PC-9 (cell line): ENCODE measurements at regions of chr1 and their contacts with region 1.

Region 1: GRCh38 chr1:75785983-75786853 is at the start of gene RABGGTB:
- DNase-seq: peak; percentile 88 to 95
- H3K4me3 ChIP-seq: peak within 1 kb of the TSS; percentile 88
- H3K27ac ChIP-seq: peak within 1 kb of the TSS; percentile 81
- H3K4me1 ChIP-seq: peaks cover 37% of the 10 kb centered on the region
- H3K27me3 ChIP-seq: no peaks in the 10 kb centered on the region
- CTCF ChIP-seq: no peak
- total RNA-seq, gene RABGGTB: 80.6 and 87.5 TPM in 2 replicates

Region 2: DNA sequence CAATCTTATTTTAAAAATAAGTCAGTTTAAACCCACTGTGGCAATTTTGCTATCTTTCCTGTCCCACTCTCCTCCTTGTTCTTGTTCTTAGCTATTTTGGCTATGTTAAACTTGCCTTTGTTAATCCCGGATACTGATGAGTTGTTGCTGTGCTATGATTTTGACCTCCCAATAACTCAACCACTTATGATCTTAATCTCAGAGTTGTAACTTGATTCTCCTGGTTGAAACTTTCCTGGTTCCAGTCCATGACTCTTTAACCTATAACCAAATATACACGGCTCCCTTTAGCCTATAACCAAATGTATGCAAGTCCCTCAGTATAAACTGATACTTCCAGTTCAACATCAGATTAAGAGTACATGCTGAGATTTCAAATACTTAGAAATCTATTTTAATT is 77.3 kb before region 1 on chr1:
- CTCF ChIA-PET with region 1: interaction called, 3 read pairs
- POLR2A ChIA-PET with region 1: interaction called, 14 read pairs
- intact Hi-C with region 1: no loop called
- DNase-seq: peak in 1 of 2 experiments; percentile 94
- H3K4me3 ChIP-seq: peak overlapping the region; percentile 9; the same call in 1 of the 2 replicates
- H3K27ac ChIP-seq: peak overlapping the region; percentile 64
- H3K4me1 ChIP-seq: peaks cover 43% of the 10 kb centered on the region
- H3K27me3 ChIP-seq: no peaks in the 10 kb centered on the region
- CTCF ChIP-seq: no peak

Region 3: GRCh38 chr1:75724472-75725022 is 61.7 kb before region 1 on chr1 and contains the start of gene ACADM:
- CTCF ChIA-PET with region 1: no interaction called
- POLR2A ChIA-PET with region 1: no interaction called
- intact Hi-C with region 1: loop called (anchors 1 kb)
- DNase-seq: peak; percentile 81 to 86
- H3K4me3 ChIP-seq: peak within 1 kb of the TSS; percentile 90
- H3K27ac ChIP-seq: peak within 1 kb of the TSS; percentile 73
- H3K4me1 ChIP-seq: peaks cover 17% of the 10 kb centered on the region
- H3K27me3 ChIP-seq: no peaks in the 10 kb centered on the region
- CTCF ChIP-seq: no peak
- total RNA-seq, gene ACADM: 33.0 and 36.5 TPM in 2 replicates

Region 4: DNA sequence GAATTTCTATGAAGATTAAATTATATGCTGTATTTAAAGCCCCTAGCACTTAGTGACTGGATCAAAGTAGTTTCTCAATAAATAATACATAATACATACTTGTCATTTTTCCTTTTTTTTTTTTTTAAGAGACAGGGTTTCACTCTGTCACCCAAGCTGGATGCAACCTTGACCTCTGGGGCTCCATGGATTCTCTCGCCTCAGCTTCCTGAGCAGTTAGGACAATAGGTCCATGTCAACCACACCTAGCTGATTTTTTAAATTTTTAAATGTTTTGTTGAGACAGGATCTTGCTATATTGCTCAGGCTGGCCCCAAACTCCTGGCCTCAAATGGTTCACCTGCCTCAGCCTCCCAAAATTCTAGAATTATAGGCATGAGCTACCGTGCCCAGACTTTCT is 55.8 kb before region 1 on chr1:
- CTCF ChIA-PET with region 1: interaction called, 15 read pairs
- POLR2A ChIA-PET with region 1: no interaction called
- intact Hi-C with region 1: no loop called
- DNase-seq: no peak
- H3K4me3 ChIP-seq: no peak overlapping the region
- H3K27ac ChIP-seq: no peak overlapping the region
- H3K4me1 ChIP-seq: peaks cover 11% of the 10 kb centered on the region
- H3K27me3 ChIP-seq: no peaks in the 10 kb centered on the region
- CTCF ChIP-seq: no peak